AG04449 (cell line): ENCODE measurements at regions of chr10 and their contacts with region 1.

Region 1: DNA sequence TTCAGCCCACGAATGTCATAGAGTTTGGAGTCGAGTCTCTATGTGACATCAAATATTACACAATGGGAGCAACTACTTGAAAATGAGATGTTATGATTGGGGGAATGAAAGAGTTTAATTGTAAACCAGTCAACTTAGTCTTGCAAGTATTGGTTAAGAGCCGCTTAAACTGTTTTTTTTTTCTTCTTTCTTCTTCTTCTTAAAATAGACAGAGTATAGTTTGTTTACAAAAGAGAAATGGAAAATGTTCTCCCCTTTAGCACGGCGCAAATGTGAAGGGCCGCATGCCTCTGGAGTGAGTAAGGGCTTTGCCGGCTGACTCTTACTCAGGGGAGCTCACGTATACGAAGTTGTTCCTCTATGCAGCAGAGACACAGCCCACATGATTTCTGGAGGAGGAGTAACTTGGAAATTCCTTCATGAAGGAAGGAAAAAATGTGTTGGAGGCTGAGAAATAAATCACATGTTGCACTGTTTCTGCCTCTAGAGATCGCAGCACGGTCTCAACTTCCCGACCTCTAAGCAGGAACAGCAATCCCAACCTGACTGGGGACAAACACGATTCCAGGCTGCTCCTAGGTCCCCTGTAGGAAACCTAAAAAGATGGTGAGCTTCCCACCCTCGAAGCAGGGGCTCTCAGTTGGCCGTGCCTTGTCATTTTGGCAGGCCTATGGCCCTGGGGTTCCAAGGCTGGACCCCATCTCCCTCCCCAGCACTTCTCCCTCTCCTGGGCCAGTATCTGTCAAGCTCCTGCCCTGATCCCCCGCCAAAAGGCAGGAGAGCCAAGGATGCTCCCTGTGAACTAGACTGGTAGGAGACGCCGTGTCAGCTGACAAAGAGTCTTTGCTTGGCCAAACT is 44.8 kb downstream of the MYOF start:
- DNase-seq: peak; percentile 98
- H3K4me3 ChIP-seq: no peak overlapping the region; the same call in none of the 2 replicates
- CTCF ChIP-seq: no peak

Region 2: GRCh38 chr10:93386631-93387369 is 50.5 kb before region 1 on chr10:
- CTCF ChIA-PET with region 1: interaction called, 3 read pairs
- POLR2A ChIA-PET with region 1: interaction called, 10 read pairs
- DNase-seq: no peak
- H3K4me3 ChIP-seq: no peak overlapping the region
- CTCF ChIP-seq: no peak

Region 3: GRCh38 chr10:93458821-93459257 is 21.5 kb after region 1 on chr10:
- CTCF ChIA-PET with region 1: interaction called, 8 read pairs
- POLR2A ChIA-PET with region 1: interaction called, 15 read pairs
- DNase-seq: peak; percentile 99
- H3K4me3 ChIP-seq: no peak overlapping the region
- CTCF ChIP-seq: no peak

Region 4: DNA sequence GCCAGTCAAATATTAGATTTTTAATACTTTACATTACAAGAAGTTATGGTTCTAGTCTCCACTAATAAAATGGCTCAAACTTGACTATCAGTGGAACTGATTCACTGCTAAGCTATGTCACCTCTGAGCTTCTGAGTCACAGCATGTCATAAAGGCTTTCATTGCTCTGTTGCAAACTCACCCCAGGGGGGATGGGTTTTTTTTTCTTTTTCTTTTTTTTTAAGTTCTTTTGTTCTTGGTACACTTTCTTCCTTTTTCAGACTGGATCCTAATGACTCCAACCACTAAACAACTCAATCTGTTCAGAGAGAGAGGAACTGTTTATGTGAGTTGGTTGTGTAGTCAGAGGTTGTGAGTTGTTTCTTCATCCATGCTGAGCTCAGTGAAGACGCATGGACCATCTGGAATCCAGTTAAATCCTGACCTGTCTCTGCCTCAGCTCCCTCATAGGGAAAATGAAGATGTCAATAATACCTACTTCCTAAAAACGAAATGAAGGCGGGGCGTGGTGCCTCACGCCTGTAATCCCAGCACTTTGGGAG is 33.9 kb after region 1 on chr10:
- CTCF ChIA-PET with region 1: interaction called, 7 read pairs
- POLR2A ChIA-PET with region 1: interaction called, 13 read pairs
- DNase-seq: peak; percentile 70
- H3K4me3 ChIP-seq: no peak overlapping the region
- CTCF ChIP-seq: no peak